CD8-positive, alpha-beta memory T cell (primary cell): ENCODE measurements at regions of chr6 and their contacts with region 1.

Region 1: GRCh38 chr6:37698261-37699137 is 816 bp upstream of the MDGA1 start:
- DNase-seq: peak; percentile 49 to 80 (median 68)
- H3K4me3 ChIP-seq: peak overlapping the region; percentile 75
- H3K4me3 Mint-ChIP-seq: peak overlapping the region; percentile 96 to 100 (median 98)
- H3K27ac ChIP-seq: peak overlapping the region; percentile 51
- H3K27ac Mint-ChIP-seq: peak overlapping the region; percentile 90 to 100 (median 96)
- H3K4me1 ChIP-seq: peaks cover 20% of the 10 kb centered on the region
- H3K4me1 Mint-ChIP-seq: peaks cover 27 to 41% (median 39%) of the 10 kb centered on the region in 3 donors
- H3K27me3 ChIP-seq: peaks cover 33% of the 10 kb centered on the region
- H3K27me3 Mint-ChIP-seq: peaks cover 21 to 25% of the 10 kb centered on the region in 2 donors

Region 2: GRCh38 chr6:37819177-37819823 is 120.8 kb after region 1 on chr6 and contains the start of gene ZFAND3:
- CTCF ChIA-PET with region 1: interaction called, 4 read pairs
- POLR2A ChIA-PET with region 1: interaction called, 10 read pairs
- DNase-seq: peak; percentile 84 to 96 (median 94)
- H3K4me3 ChIP-seq: peak within 1 kb of the TSS; percentile 98
- H3K4me3 Mint-ChIP-seq: peak within 1 kb of the TSS; percentile 94 to 99 (median 98)
- H3K27ac ChIP-seq: peak within 1 kb of the TSS; percentile 93
- H3K27ac Mint-ChIP-seq: peak within 1 kb of the TSS; percentile 95 to 100 (median 98)
- H3K4me1 ChIP-seq: peaks cover 40% of the 10 kb centered on the region
- H3K4me1 Mint-ChIP-seq: peaks cover 47 to 57% (median 53%) of the 10 kb centered on the region in 3 donors
- H3K27me3 ChIP-seq: no peaks in the 10 kb centered on the region
- H3K27me3 Mint-ChIP-seq: no peaks in the 10 kb centered on the region
- total RNA-seq, gene ZFAND3: 29.1 to 29.4 TPM

Region 3: GRCh38 chr6:37868447-37868825 is 169.9 kb after region 1 on chr6:
- CTCF ChIA-PET with region 1: no interaction called
- POLR2A ChIA-PET with region 1: no interaction called
- DNase-seq: no peak
- H3K4me3 ChIP-seq: no peak overlapping the region
- H3K4me3 Mint-ChIP-seq: peak overlapping the region in 5 of 7 donors; percentile 8 to 55 (median 44)
- H3K27ac ChIP-seq: no peak overlapping the region
- H3K27ac Mint-ChIP-seq: peak overlapping the region in 4 of 8 donors; percentile 13 to 86 (median 52)
- H3K4me1 ChIP-seq: peaks cover 23% of the 10 kb centered on the region
- H3K4me1 Mint-ChIP-seq: peaks cover 62 to 80% (median 76%) of the 10 kb centered on the region in 3 donors
- H3K27me3 ChIP-seq: no peaks in the 10 kb centered on the region
- H3K27me3 Mint-ChIP-seq: no peaks in the 10 kb centered on the region